Common myeloid progenitor, CD34-positive (primary cell): ENCODE measurements at regions of chr15 and their contacts with region 1.

Region 1: DNA sequence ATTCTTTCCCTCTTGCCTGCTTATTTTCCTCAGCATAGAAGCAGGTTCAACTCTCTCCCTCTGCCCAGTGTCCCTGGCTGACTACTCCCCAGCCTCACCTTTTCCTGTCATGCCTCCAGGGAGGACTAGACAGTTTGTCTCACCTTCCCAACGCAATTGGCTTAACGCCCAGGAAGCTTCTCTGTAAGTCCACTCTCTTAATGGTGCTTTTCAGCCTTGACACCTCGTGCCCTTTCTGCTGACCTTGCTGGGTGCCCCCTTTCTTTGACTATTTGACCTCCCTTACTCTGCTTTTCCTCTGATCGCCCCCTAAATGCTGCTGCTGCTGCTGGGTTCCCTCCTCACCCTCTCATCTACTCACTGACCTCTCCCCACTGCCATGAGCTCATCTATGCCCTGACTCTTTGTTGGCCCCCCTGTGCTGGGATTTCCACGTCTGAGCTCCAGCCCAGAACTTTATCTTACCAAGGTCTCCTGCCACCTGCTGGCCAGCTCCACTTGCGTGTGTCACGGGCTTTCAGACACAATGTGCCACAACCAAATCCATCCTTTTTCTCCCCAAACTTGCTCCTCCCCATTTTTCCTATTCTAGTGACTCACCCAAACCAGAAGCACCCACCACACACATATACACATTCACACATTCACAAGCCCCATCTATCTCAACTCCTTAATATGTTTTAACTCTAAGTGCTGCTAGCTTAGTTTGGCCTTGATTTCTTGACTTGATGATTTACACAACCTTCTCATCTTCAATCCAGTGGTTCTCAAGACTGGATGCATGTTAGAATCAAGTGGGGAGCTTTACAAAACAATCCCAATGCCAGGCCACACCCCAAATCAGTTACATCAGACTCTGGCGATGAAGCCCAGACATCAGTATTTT is 16.6 kb downstream of the EPB42 start:
- DNase-seq: peak; percentile 63 to 77 (median 77)
- H3K4me3 ChIP-seq: no peak overlapping the region
- H3K27ac ChIP-seq: no peak overlapping the region
- H3K4me1 ChIP-seq: no peaks in the 10 kb centered on the region
- H3K27me3 ChIP-seq: peaks cover 0 to 18% (median 10%) of the 10 kb centered on the region in 5 experiments

Region 2: GRCh38 chr15:42704492-42704926 is 499.8 kb before region 1 on chr15:
- CTCF ChIA-PET with region 1: interaction called, 10 read pairs
- POLR2A ChIA-PET with region 1: no interaction called
- DNase-seq: peak; percentile 58 to 80 (median 71)
- H3K4me3 ChIP-seq: no peak overlapping the region
- H3K27ac ChIP-seq: no peak overlapping the region
- H3K4me1 ChIP-seq: peaks cover 0 to 4% (median 1%) of the 10 kb centered on the region in 4 experiments
- H3K27me3 ChIP-seq: no peaks in the 10 kb centered on the region

Region 3: DNA sequence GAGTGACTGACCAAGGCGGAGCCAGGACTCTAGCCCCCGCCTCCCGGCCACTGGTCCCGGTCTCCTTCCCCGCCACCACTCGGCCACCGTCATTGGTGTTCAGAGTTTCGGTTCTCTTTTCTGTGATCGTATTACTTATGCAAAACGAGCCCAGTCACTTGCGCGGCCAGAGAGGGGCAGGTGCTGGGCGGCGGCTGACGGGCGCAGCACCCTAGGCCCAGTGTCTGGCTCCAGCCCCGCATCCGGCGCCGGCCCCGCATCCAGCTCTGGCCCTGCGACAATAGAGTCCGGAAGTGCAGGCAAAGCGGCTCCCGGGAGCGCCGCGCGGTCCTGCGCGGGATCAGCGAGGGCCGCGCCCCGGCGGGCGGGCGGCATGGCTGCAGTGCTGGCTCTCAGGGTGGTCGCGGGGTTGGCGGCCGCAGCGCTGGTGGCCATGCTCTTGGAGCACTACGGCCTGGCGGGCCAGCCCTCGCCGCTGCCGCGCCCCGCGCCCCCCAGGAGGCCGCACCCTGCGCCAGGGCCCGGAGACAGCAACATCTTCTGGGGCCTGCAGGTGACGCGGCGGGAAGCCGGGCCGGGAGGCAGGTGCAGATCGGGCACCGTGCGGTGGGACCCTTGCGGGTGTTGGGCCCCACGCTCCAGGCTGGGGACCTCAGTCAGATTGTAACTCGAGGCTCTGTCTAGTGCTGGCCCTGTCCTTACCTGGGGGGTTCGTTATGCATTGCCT is 70.7 kb before region 1 on chr15 and contains the start of gene TMEM62:
- CTCF ChIA-PET with region 1: no interaction called
- POLR2A ChIA-PET with region 1: no interaction called
- DNase-seq: peak; percentile 60 to 83 (median 77)
- H3K4me3 ChIP-seq: peak within 1 kb of the TSS; percentile 81 to 97 (median 87)
- H3K27ac ChIP-seq: peak within 1 kb of the TSS; percentile 36 to 83
- H3K4me1 ChIP-seq: peaks cover 3 to 20% (median 15%) of the 10 kb centered on the region in 4 experiments
- H3K27me3 ChIP-seq: no peaks in the 10 kb centered on the region

Region 4: GRCh38 chr15:43185157-43186017 is 18.9 kb before region 1 on chr15 and contains the start of gene CCNDBP1:
- CTCF ChIA-PET with region 1: interaction called, 50 read pairs
- POLR2A ChIA-PET with region 1: interaction called, 4 read pairs
- DNase-seq: peak; percentile 88 to 94 (median 91)
- H3K4me3 ChIP-seq: peak within 1 kb of the TSS; percentile 67 to 87 (median 81)
- H3K27ac ChIP-seq: peak within 1 kb of the TSS; percentile 59 to 89
- H3K4me1 ChIP-seq: peaks cover 6 to 20% (median 15%) of the 10 kb centered on the region in 4 experiments
- H3K27me3 ChIP-seq: no peaks in the 10 kb centered on the region

Region 5: GRCh38 chr15:43230640-43231115 is 26.4 kb after region 1 on chr15:
- CTCF ChIA-PET with region 1: interaction called, 29 read pairs
- POLR2A ChIA-PET with region 1: no interaction called
- DNase-seq: peak in 2 of 3 donors; percentile 69 to 82
- H3K4me3 ChIP-seq: no peak overlapping the region
- H3K27ac ChIP-seq: no peak overlapping the region
- H3K4me1 ChIP-seq: peaks cover 0 to 16% (median 3%) of the 10 kb centered on the region in 4 experiments
- H3K27me3 ChIP-seq: peaks cover 0 to 9% (median 2%) of the 10 kb centered on the region in 5 experiments

Region 6: DNA sequence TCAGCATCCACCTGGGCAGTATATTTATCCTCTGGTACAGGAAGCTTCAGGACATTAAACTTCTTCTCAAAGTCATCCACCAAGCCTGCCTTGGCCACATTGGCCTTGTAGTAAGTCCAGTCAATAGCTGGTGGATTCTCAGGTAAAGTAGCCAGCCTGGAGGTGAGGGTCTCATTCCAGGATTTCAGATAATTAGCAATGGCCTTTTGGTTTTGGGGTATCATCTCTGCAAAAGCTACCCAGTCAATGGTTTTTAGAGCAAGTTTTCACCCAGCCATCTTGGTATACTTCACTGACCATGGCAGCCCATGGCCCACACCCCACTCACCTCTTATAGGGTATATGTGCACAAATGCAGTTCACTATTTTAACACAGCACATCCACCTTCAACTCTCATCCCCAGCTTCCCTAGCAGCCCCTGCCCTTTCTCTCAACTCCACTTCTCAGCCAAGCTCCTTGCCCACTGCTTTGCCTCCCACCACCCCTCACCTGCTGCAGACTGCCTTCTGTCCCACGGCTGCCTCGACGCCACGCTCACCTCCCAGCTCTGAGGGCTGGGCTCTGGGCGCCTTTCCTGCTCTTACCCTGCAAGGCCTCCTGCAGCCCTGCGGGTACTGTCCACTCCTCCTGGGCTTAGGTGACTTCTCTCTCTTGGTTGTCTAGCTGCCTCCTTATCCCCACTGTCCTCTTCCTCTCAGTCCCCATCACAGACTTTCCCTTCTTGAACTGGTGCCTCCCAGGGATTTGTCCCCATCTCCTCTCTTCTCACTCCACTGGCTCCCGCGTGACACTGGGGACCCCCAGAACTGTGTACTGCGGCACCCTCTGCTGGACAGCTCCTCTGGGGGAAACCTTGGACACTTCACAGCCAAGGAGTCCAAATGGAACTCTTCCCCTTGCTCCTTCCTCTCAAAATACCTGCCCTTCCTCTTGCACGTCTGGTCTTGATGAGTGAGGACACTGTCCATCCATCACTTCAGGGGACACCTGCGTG is 64.1 kb after region 1 on chr15:
- CTCF ChIA-PET with region 1: interaction called, 27 read pairs
- POLR2A ChIA-PET with region 1: no interaction called
- DNase-seq: peak; percentile 49 to 62 (median 60)
- H3K4me3 ChIP-seq: no peak overlapping the region
- H3K27ac ChIP-seq: no peak overlapping the region
- H3K4me1 ChIP-seq: peaks cover 8 to 36% (median 21%) of the 10 kb centered on the region in 4 experiments
- H3K27me3 ChIP-seq: peaks cover 0 to 2% (median 0%) of the 10 kb centered on the region in 5 experiments